MCF 10A (cell line): ENCODE measurements at regions of chr9 and their contacts with region 1.

Region 1: GRCh38 chr9:124818431-124819281 is 34.6 kb upstream of the WDR38 start:
- DNase-seq: peak; percentile 78
- H3K4me3 Mint-ChIP-seq: peak overlapping the region; percentile 15
- H3K27ac Mint-ChIP-seq: peak overlapping the region; percentile 89
- H3K4me1 Mint-ChIP-seq: peaks cover 19% of the 10 kb centered on the region
- H3K27me3 Mint-ChIP-seq: no peaks in the 10 kb centered on the region
- CTCF ChIP-seq: no peak

Region 2: DNA sequence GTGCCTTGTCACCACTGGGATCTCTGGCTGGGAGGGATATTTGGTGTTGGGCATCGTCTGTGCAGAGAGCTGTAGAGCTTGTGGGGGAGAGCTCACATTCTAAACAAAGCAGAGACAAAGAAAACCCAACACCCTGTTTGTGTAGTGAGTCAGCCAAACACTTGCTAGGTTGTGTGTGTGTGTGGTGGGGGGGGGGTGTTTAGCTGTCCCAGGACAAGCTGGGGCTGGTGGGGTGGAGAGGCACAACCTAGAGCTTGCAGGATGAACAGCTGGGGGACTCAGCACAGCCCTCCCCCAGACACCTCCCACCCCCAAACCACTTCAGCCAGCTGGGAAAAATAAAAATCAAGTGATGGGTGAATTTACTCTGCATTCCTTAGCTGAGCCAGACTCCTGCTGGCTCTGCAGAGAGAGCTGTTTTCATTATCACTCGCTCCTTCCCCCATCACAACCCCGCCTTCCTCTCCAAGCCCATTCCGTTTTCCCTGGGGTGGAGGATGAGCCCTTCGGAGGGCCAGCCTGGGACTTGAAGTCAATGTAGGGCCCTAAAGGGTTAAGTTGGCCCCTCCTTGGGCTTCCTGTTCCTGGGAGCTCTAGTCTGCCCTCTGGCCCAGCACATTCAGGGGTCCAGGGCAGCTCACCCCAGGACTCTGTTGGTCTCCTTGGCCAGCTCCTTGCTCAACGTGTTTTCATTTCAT is 39.1 kb before region 1 on chr9:
- CTCF ChIA-PET with region 1: interaction called, 112 read pairs
- POLR2A ChIA-PET with region 1: interaction called, 13 read pairs
- intact Hi-C with region 1: no loop called
- DNase-seq: peak; percentile 78
- H3K4me3 Mint-ChIP-seq: no peak overlapping the region
- H3K27ac Mint-ChIP-seq: peak overlapping the region; percentile 63
- H3K4me1 Mint-ChIP-seq: peaks cover 27% of the 10 kb centered on the region
- H3K27me3 Mint-ChIP-seq: peaks cover 9% of the 10 kb centered on the region
- CTCF ChIP-seq: no peak

Region 3: GRCh38 chr9:124829284-124829669 is 10.6 kb after region 1 on chr9:
- CTCF ChIA-PET with region 1: interaction called, 17 read pairs
- POLR2A ChIA-PET with region 1: interaction called, 83 read pairs
- intact Hi-C with region 1: no loop called
- DNase-seq: no peak
- H3K4me3 Mint-ChIP-seq: no peak overlapping the region
- H3K27ac Mint-ChIP-seq: peak overlapping the region; percentile 18
- H3K4me1 Mint-ChIP-seq: peaks cover 9% of the 10 kb centered on the region
- H3K27me3 Mint-ChIP-seq: no peaks in the 10 kb centered on the region
- CTCF ChIP-seq: no peak

Region 4: DNA sequence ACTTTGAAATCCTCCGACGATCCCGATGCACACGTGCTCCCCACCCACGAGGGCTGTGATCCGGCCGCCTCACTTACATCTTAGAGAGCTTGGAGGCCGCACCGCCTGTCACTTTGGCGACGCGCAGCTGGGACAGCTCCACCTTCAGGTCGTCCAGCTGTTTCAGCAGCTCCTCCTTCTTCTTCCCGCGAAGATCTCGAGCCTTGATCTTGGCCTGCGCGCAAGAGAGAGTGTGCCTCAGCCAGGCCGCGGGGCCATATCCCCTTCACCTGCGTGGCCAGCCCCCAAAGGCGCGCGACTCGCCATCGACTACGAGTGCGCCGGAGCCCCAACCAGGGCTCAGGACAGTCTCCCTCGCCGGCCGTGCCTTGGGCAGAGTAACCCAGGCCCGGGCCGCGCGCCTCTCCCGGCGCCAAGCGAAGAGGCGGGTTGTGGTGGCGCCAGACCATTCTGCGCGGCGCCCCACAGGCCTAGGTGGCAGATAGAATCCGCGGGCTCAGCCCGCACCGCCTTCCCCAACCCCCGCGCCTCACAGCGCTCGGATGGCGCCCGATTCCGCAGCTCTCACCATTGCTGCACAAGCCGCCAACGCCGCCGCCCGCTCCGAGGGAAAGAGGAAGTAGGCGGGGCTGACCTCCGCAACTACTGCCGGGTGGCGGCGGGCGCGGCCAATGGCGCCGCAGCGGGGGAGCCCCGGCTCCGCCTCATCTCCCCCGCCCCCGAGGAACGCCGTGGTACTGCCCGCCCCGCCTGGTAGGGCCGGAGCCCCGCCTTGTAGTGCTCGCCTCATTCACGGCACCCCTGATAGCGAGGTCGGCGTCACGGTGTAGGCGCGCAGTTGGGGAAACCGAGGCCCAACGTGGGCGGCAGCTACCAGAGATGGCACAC is 42.9 kb after region 1 on chr9 and contains the starts of genes ARPC5L and RPL35:
- CTCF ChIA-PET with region 1: interaction called, 50 read pairs
- POLR2A ChIA-PET with region 1: interaction called, 47 read pairs
- intact Hi-C with region 1: no loop called
- DNase-seq: peak; percentile 93
- H3K4me3 Mint-ChIP-seq: peak within 1 kb of the TSS; percentile 81
- H3K27ac Mint-ChIP-seq: peak within 1 kb of the TSS; percentile 88
- H3K4me1 Mint-ChIP-seq: peaks cover 22% of the 10 kb centered on the region
- H3K27me3 Mint-ChIP-seq: no peaks in the 10 kb centered on the region
- CTCF ChIP-seq: no peak
- total RNA-seq, gene ARPC5L: 72.5 and 84.2 TPM in 2 replicates
- total RNA-seq, gene RPL35: 1,966 and 2,009 TPM in 2 replicates

Region 5: DNA sequence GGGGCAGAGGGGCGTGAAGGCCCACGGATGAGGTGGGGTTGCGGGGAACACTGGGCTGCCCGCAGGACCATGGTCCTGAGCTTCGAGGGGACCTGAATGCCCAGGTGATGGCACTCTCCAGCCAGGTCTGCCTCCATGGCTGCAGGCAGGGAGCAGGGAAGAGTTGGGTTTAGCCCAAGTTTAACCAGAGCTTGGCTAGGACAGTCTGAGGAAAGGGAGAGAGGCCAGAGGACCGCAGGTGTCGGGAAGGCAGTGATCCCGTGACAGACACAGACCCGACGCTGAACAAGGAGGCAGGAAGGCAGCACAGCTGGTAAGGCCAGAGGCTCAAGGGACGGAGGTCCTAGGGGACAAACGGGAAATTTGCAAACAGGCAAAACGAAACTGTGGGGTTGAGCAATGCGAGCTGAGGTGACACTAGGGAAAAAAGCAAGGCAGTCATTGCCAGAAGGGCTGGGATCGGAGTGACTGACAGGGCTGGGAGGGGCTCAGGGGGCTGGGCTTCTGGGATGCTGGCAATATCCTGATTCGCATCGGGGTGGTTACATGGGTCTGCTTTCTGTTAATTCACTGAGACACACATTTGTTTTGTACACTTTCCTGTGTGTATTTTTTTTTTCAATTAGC is 68.3 kb after region 1 on chr9:
- CTCF ChIA-PET with region 1: no interaction called
- POLR2A ChIA-PET with region 1: no interaction called
- intact Hi-C with region 1: no loop called
- DNase-seq: no peak
- H3K4me3 Mint-ChIP-seq: no peak overlapping the region
- H3K27ac Mint-ChIP-seq: no peak overlapping the region
- H3K4me1 Mint-ChIP-seq: no peaks in the 10 kb centered on the region
- H3K27me3 Mint-ChIP-seq: no peaks in the 10 kb centered on the region
- CTCF ChIP-seq: no peak